ENCODE measurements at regions of chr9 and their contacts with region 1.

Region 1: GRCh38 chr9:127450830-127451724 is at the starts of genes LRSAM1 and RPL12:
- DNase-seq: peak; percentile 95
- H3K4me3 ChIP-seq: peak within 1 kb of the TSS; percentile 92 to 99
- H3K27ac ChIP-seq: peak within 1 kb of the TSS; percentile 77 to 95
- H3K4me1 ChIP-seq: peaks cover 5 to 40% of the 10 kb centered on the region in 2 experiments; a peak in 3 of 4 replicates
- H3K27me3 ChIP-seq: no peaks in the 10 kb centered on the region
- CTCF ChIP-seq: peak; percentile 10; the same call in 1 of the 2 replicates
- EP300 ChIP-seq: peak in 1 of 2 experiments; percentile 20; a peak in 1 of 4 replicates
- RAD21 ChIP-seq: no peak
- polyA plus RNA-seq, gene LRSAM1: 5.5 and 8.0 TPM in 2 replicates
- polyA plus RNA-seq, gene RPL12: 3,270 and 3,754 TPM in 2 replicates

Region 2: GRCh38 chr9:127423934-127424675 is 27.0 kb before region 1 on chr9 and contains the start of gene ZNF79:
- CTCF ChIA-PET with region 1: no interaction called
- POLR2A ChIA-PET with region 1: interaction called, 12 read pairs
- DNase-seq: peak; percentile 95
- H3K4me3 ChIP-seq: peak within 1 kb of the TSS; percentile 90 to 97
- H3K27ac ChIP-seq: peak within 1 kb of the TSS; percentile 82 to 98
- H3K4me1 ChIP-seq: peaks cover 7 to 18% of the 10 kb centered on the region in 2 experiments; a peak in 3 of 4 replicates
- H3K27me3 ChIP-seq: no peaks in the 10 kb centered on the region
- CTCF ChIP-seq: no peak
- EP300 ChIP-seq: no peak
- RAD21 ChIP-seq: no peak; the same call in 1 of the 2 replicates
- polyA plus RNA-seq, gene ZNF79: 4.6 and 5.9 TPM in 2 replicates

Region 3: DNA sequence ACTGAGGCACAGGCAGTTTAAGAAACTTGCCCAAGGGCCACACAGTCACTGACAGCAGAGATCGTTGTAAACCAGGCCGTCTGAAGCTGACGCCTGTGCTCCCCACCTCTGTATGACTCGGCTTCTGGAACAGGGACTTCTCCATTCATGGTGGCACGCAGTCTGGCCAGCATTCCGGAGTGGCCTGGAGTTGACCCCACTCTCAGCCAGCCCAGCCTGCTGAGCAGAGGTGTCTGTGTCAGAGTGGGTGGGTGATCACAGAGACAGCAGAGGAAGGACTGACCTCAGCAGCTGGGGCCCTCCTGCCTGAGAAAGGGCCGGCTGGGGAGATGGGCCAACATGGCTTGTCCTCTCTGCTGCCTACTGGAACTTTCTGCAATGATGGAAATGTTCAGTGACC is 12.8 kb after region 1 on chr9:
- CTCF ChIA-PET with region 1: interaction called, 5 read pairs
- POLR2A ChIA-PET with region 1: interaction called, 12 read pairs
- DNase-seq: no peak
- H3K4me3 ChIP-seq: no peak overlapping the region
- H3K27ac ChIP-seq: peak overlapping the region in 1 of 2 experiments; percentile 40; a peak in 1 of 4 replicates
- H3K4me1 ChIP-seq: peaks cover 0 to 12% of the 10 kb centered on the region in 2 experiments; a peak in 1 of 4 replicates
- H3K27me3 ChIP-seq: no peaks in the 10 kb centered on the region
- CTCF ChIP-seq: no peak
- EP300 ChIP-seq: no peak
- RAD21 ChIP-seq: no peak

Measured in SK-N-SH (cell line).